Mucosa of descending colon (tissue), 3 donors: ENCODE measurements at regions of chr20 and their contacts with region 1.

Region 1: GRCh38 chr20:19784511-19785172 is 26.6 kb downstream of the RIN2 start:
- DNase-seq: peak in 2 of 3 donors; percentile 44 to 77
- ATAC-seq: peak; percentile 89
- H3K4me3 ChIP-seq: no peak overlapping the region
- H3K4me1 ChIP-seq: peaks cover 18% of the 10 kb centered on the region
- CTCF ChIP-seq: no peak

Region 2: GRCh38 chr20:19661717-19662636 is 122.7 kb before region 1 on chr20:
- intact Hi-C with region 1: no loop called
- DNase-seq: peak in 2 of 3 donors; percentile 62 to 80
- ATAC-seq: peak; percentile 82
- H3K4me3 ChIP-seq: no peak overlapping the region
- H3K4me1 ChIP-seq: no peaks in the 10 kb centered on the region
- CTCF ChIP-seq: peak; percentile 96

Region 3: GRCh38 chr20:19889011-19889953 is 104.6 kb after region 1 on chr20:
- intact Hi-C with region 1: loop called in 1 of 2 experiments (anchors 10 kb)
- DNase-seq: peak in 2 of 3 donors; percentile 57 to 65
- ATAC-seq: peak; percentile 39
- H3K4me3 ChIP-seq: no peak overlapping the region
- H3K4me1 ChIP-seq: peaks cover 39% of the 10 kb centered on the region
- CTCF ChIP-seq: no peak

Region 4: GRCh38 chr20:19995220-19995863 is 210.7 kb after region 1 on chr20:
- intact Hi-C with region 1: loop called (anchors 5 to 10 kb)
- DNase-seq: peak in 1 of 3 donors; percentile 52
- ATAC-seq: peak; percentile 56
- H3K4me3 ChIP-seq: no peak overlapping the region
- H3K4me1 ChIP-seq: peaks cover 10% of the 10 kb centered on the region
- CTCF ChIP-seq: peak; percentile 51